Panc1 (cell line): ENCODE measurements at regions of chr16 and their contacts with region 1.

Region 1: DNA sequence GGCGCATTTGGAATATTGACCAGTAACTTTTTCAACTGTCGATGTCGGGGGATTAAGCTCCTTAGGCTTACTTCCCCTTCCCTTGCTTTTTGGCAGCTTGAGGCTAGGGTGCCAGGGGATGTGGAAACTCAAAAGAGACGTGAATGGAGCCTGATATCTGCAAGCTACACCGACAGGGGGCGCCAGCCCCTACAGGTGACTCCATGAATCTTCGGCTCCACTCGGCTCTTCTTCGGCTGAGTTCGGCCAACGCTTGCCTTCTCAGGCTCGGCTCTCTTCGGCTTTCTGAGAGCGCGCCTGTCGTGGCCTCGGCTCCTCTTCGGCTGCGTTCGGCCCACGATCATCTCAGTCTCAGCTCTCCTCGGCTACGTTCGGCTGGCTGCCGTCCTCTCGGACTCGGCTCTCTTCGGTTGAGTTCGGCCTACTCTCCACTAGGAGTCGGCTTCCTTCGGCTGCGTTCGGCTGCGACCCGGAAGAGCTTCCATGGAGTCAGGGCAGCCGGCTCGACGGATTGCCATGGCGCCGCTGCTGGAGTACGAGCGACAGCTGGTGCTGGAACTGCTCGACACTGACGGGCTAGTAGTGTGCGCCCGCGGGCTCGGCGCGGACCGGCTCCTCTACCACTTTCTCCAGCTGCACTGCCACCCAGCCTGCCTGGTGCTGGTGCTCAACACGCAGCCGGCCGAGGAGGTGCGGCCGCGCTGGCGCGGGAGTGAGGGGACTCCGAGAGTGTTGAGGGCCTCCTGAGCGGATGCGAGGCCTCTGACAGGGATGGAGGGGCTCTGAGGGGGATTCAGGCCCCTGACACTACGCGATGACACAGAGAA is at the start of gene ERCC4:
- DNase-seq: peak; percentile 99
- ATAC-seq: peak; percentile 99
- H3K4me3 ChIP-seq: peak within 1 kb of the TSS; percentile 85 to 87
- H3K27ac ChIP-seq: peak within 1 kb of the TSS; percentile 96
- H3K4me1 ChIP-seq: peaks cover 34% of the 10 kb centered on the region
- H3K27me3 ChIP-seq: peaks cover 8% of the 10 kb centered on the region; the same call in 1 of the 2 replicates
- CTCF ChIP-seq: peak; percentile 100
- total RNA-seq, gene ERCC4: 23.4 TPM

Region 2: GRCh38 chr16:14070877-14071575 is 151.1 kb after region 1 on chr16 and contains the start of gene MRTFB:
- CTCF ChIA-PET with region 1: interaction called, 3 read pairs
- POLR2A ChIA-PET with region 1: no interaction called
- in situ Hi-C with region 1: no loop called
- intact Hi-C with region 1: loop called (anchors 5 kb)
- DNase-seq: no peak
- ATAC-seq: peak; percentile 95
- H3K4me3 ChIP-seq: peak within 1 kb of the TSS; percentile 75 to 78
- H3K27ac ChIP-seq: peak within 1 kb of the TSS; percentile 91
- H3K4me1 ChIP-seq: peaks cover 26% of the 10 kb centered on the region
- H3K27me3 ChIP-seq: no peaks in the 10 kb centered on the region
- CTCF ChIP-seq: no peak
- total RNA-seq, gene MRTFB: 90.5 TPM

Region 3: GRCh38 chr16:14186007-14186794 is 266.3 kb after region 1 on chr16:
- CTCF ChIA-PET with region 1: no interaction called
- POLR2A ChIA-PET with region 1: no interaction called
- in situ Hi-C with region 1: no loop called
- intact Hi-C with region 1: loop called (anchors 10 kb)
- DNase-seq: no peak
- ATAC-seq: peak; percentile 67; the same call in 1 of the 2 replicates
- H3K4me3 ChIP-seq: no peak overlapping the region; a peak in 1 of 4 replicates
- H3K27ac ChIP-seq: peak overlapping the region; percentile 40
- H3K4me1 ChIP-seq: peaks cover 27% of the 10 kb centered on the region
- H3K27me3 ChIP-seq: no peaks in the 10 kb centered on the region
- CTCF ChIP-seq: peak; percentile 76

Region 4: DNA sequence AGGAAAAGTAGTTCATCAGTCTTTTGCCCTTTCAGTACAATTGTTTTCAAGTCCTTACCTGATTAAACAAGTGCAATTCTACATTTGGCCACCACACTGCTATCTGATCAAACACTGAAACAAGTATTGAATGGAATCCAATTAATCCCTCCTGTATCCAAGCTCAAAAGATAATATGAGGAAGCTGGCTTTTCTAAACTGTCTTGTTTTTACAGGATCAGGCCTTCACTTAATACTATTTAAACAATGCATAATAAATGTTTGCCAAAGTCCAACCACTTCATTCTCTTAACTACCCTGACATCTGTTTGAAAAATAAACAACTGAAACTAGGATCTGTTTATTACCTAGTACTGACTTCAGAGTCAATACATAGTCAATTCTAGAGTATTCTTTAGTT is 282.8 kb after region 1 on chr16:
- CTCF ChIA-PET with region 1: interaction called, 11 read pairs
- POLR2A ChIA-PET with region 1: no interaction called
- in situ Hi-C with region 1: no loop called
- intact Hi-C with region 1: no loop called
- DNase-seq: no peak
- ATAC-seq: no peak
- H3K4me3 ChIP-seq: no peak overlapping the region
- H3K27ac ChIP-seq: no peak overlapping the region
- H3K4me1 ChIP-seq: peaks cover 2% of the 10 kb centered on the region; the same call in 1 of the 2 replicates
- H3K27me3 ChIP-seq: no peaks in the 10 kb centered on the region
- CTCF ChIP-seq: peak; percentile 30; the same call in 1 of the 2 replicates

Region 5: GRCh38 chr16:14249291-14250032 is 329.6 kb after region 1 on chr16:
- CTCF ChIA-PET with region 1: interaction called, 8 read pairs
- POLR2A ChIA-PET with region 1: no interaction called
- in situ Hi-C with region 1: loop called (anchors 25 kb)
- intact Hi-C with region 1: loop called (anchors 10 kb)
- DNase-seq: peak; percentile 43
- ATAC-seq: peak; percentile 32; the same call in 1 of the 2 replicates
- H3K4me3 ChIP-seq: no peak overlapping the region
- H3K27ac ChIP-seq: no peak overlapping the region
- H3K4me1 ChIP-seq: no peaks in the 10 kb centered on the region
- H3K27me3 ChIP-seq: no peaks in the 10 kb centered on the region
- CTCF ChIP-seq: peak; percentile 96

Region 6: DNA sequence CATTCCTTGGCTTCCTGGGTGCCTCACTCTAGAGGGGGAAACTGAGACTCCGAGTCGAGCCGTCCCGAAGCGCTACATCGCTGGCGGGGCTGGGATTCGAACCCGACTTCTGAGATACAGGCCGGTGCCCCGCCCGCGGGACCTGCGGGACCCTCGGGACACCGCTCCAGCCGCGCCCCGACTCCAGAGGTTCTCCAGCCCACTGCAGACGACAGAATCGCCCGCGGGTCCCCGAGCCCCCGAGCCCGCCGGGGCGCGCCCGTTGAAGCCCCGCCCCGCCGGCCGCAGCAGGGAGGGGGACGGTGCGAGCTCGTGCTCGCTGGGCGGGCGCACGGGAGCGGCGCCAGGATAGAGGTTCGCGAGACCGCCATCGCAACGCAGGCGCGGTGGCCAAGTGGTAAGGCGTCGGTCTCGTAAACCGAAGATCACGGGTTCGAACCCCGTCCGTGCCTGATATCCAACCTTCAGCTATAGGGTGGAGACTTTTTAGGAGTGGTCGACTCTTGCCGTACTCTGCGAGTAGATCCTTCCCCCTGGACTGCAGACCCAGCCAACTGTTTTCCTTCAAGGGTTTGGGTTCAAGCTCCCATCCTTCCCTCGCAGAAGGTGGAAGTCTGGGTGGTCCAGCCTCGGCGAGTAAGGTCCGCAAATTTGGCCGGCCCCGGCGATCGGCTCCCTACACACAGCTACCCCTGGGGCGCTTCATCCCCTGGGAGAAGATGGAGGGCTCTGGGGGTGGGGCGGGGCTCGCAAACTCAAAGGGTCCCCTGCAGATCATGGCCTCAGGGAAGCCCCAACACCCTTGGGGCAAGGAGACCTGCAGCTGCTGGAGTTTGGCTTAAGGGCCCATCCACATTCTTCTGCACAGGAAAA is 365.9 kb after region 1 on chr16:
- CTCF ChIA-PET with region 1: interaction called, 7 read pairs
- POLR2A ChIA-PET with region 1: no interaction called
- in situ Hi-C with region 1: no loop called
- intact Hi-C with region 1: loop called (anchors 2 kb)
- DNase-seq: peak; percentile 99
- ATAC-seq: peak; percentile 95
- H3K4me3 ChIP-seq: peak overlapping the region; percentile 52 to 93
- H3K27ac ChIP-seq: peak overlapping the region; percentile 37
- H3K4me1 ChIP-seq: peaks cover 13% of the 10 kb centered on the region
- H3K27me3 ChIP-seq: no peaks in the 10 kb centered on the region
- CTCF ChIP-seq: peak; percentile 26; the same call in 1 of the 2 replicates

Region 7: GRCh38 chr16:14529010-14529669 is 609.2 kb after region 1 on chr16:
- CTCF ChIA-PET with region 1: no interaction called
- POLR2A ChIA-PET with region 1: no interaction called
- in situ Hi-C with region 1: no loop called
- intact Hi-C with region 1: loop called (anchors 10 kb)
- DNase-seq: peak; percentile 87
- ATAC-seq: peak; percentile 91
- H3K4me3 ChIP-seq: no peak overlapping the region
- H3K27ac ChIP-seq: peak overlapping the region; percentile 72
- H3K4me1 ChIP-seq: peaks cover 8% of the 10 kb centered on the region
- H3K27me3 ChIP-seq: no peaks in the 10 kb centered on the region
- CTCF ChIP-seq: peak; percentile 87